ENCODE measurements at regions of chr17 and their contacts with region 1.

Region 1: DNA sequence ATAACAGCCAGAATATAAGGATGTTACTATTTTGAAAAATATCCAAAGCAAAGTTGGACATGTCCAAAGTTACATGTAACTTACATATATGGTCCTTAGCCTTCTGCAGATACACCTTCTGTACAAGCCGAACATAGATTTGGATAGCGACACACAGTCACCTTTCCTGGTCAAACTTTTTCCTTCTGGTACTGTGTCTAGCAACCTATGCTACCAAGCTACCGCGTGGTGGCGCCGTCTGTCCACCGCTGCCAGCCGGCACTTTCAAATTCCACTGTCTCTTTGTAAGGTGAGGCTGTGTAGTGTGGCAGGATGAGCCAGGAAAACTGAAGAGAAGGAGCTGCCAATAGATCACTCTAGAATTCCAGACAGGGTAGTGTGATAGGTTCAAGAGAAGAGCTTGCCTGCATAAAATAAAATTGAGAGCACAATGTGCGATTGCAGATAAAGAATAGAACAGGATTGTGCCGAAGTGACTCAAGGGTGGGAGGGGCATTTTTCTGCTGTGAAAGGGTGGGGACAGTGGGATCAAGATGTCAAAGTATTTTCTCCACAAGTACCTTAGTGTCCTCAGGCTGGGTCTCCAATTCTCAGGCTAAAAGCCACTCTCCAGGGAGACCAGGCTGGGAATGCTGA is 366.9 kb downstream of the SLC39A11 start:
- DNase-seq: peak; percentile 41 to 73
- ATAC-seq: peak; percentile 81

Region 2: GRCh38 chr17:72362376-72363088 is 363.0 kb before region 1 on chr17:
- intact Hi-C with region 1: no loop called
- DNase-seq: no peak
- ATAC-seq: no peak

Region 3: DNA sequence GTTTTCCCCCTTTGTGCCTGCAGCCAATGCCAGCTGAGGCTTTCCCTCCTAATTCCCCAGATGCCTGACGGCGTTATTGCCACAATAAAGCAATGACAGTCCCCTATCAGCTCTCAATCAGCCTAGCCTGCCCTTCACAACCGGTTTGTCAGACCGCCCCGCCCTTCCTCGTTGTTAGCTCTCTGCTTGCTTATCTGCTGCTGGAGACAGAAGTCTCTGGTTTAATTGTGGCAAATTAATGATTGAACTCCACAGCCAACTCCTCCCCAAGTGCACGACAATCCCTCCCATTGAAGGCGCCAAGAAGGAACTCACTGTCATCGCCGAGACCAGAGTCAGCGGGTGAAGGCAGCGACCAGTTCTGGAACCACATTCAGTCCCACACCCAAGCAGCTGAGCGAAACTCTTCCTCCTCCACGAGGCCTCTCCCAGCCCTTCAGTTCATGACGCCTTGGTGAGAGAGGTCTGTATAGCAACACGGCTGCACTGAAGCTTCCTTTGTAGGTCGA is 107.5 kb before region 1 on chr17:
- intact Hi-C with region 1: no loop called
- DNase-seq: peak; percentile 94 to 97
- ATAC-seq: peak; percentile 77

Region 4: GRCh38 chr17:72788950-72789585 is 63.5 kb after region 1 on chr17:
- intact Hi-C with region 1: no loop called
- DNase-seq: no peak
- ATAC-seq: no peak

Region 5: GRCh38 chr17:73156166-73156840 is 430.8 kb after region 1 on chr17:
- intact Hi-C with region 1: loop called in 1 of 2 experiments (anchors 10 kb)
- DNase-seq: peak; percentile 36 to 77
- ATAC-seq: peak; percentile 92

Region 6: DNA sequence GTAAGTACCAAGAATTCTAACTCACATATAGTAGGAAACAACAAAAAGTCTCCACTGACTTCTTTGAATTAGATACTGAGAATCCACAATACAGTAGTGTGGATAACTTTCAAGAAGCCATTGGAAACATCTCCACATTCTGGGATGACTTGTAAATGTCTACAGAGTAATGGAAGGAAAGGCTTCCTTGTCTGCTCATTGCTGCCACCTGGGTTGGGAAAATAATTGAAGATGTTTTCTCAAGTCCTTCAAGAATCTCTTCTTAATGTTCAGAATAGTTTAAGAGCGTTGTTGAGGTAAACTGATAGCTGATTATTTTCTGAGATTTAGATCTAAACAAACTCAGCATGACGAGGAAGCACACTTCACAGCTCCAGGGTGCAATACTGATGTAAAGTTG is 522.2 kb after region 1 on chr17:
- intact Hi-C with region 1: loop called in 1 of 2 experiments (anchors 10 kb)
- DNase-seq: no peak
- ATAC-seq: peak; percentile 32

Measured in left colon (tissue), 2 donors.